H1 (cell line): ENCODE measurements at regions of chr1 and their contacts with region 1.

Region 1: DNA sequence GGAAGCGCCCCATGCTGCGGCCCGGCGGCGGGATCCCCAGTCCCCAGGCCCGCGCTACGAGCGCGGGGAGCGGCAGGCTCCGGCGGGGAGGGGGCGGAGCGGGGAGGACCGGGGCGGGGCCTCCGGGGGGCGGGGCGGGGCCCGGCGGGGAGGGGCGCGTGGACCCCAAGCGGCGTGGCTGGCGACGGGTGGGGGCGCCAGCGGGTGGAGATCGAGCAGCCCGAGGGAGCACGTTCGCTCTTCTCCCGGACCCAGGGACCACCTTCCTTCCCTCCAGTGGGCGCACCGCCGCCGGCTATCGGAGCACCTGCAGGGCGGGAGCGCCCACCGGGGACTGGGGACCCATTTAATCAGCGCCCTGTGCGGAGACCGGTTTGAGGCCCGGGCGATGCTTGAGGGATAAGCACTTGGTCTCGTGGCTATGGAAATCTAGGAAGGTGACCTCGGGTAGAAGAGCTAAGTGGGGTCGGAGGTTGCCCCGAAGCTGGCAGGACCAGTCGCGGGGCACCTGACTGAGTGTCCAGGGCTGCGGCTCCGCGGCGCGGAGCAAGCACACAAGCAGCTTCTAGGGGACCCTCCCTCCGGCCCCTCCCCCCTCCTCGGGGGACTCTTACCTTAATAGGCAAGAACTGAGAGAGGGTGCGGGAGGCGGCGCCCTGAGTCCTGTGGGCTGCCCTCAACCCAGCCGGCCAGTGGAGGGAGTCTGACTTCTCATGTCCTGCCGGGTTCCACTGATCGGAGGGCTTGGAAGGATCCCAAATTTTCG is at the start of gene TSPAN2:
- DNase-seq: peak; percentile 90 to 91
- H3K4me3 ChIP-seq: peak within 1 kb of the TSS; percentile 82 to 100 (median 93)
- H3K27ac ChIP-seq: peak within 1 kb of the TSS; percentile 91
- H3K4me1 ChIP-seq: peaks cover 4 to 10% (median 4%) of the 10 kb centered on the region in 4 experiments; a peak in 5 of 7 replicates
- H3K27me3 ChIP-seq: no peaks in the 10 kb centered on the region; a peak in 2 of 7 replicates
- CTCF ChIP-seq: peak; percentile 51 to 56 (median 52)
- EP300 ChIP-seq: no peak
- POLR2A ChIP-seq: peak; percentile 93 to 95
- RAD21 ChIP-seq: peak; percentile 25 to 41; a peak in 3 of 4 replicates
- total RNA-seq, gene TSPAN2: 13.0 and 14.2 TPM in 2 replicates

Region 2: DNA sequence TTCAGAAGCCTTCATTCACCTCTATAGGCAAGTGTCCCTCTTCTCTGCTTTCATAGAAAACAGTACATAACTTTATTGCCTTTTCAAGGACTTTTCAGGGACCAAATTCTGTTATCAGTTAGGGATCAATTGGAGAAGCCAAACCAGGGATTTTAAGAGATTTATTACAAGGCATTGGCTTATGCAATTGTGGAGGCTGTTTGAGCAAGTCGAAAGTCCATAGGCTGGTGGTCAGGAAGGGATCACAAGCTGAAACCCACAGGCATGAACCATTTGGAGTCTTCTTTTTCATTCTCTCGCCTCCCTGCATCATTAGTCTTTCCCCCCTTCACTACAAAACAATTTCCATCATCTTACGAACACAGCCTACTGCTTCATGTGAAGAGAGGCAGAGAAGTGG is 269.7 kb before region 1 on chr1:
- CTCF ChIA-PET with region 1: no interaction called
- POLR2A ChIA-PET with region 1: no interaction called
- DNase-seq: no peak
- H3K4me3 ChIP-seq: no peak overlapping the region
- H3K27ac ChIP-seq: no peak overlapping the region
- H3K4me1 ChIP-seq: no peaks in the 10 kb centered on the region
- H3K27me3 ChIP-seq: no peaks in the 10 kb centered on the region
- CTCF ChIP-seq: no peak
- EP300 ChIP-seq: no peak
- POLR2A ChIP-seq: no peak
- RAD21 ChIP-seq: no peak

Region 3: DNA sequence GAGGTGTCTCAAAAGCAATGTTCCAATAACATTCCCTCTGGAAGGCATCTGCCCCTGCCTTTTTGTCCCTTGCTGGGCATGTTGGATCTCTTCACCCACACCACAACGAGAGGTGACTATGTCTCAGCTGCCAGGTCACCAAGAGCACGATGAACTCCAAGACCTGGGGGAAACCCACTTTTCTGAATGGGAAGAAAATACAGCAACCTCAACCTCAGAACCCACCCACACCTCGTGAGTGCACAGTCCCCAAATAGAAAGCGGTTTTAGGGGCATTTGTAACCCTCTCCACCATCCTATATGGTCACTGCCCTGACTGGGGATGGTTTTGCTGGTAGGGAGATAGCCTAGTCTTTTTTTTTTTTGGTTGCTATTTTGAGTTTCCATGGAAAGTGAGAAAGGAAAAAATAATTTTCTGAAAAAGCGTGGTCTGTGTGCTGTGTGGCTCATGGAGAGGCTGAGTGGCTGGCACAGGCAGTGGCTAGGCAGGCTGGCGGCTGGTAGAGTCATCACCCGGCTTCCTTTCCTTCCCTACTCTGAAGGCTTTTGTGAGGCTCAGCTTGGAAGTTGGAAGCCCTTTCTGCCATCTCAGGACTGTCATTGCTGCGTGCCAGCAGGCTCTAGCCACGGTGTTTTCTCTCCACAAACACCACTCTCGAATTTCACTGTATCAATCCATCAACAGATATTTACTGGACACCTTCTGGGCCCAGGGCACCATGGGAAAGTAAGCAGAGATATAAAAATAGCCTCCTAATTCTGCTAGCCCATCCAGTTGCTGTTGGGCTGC is 16.1 kb before region 1 on chr1:
- CTCF ChIA-PET with region 1: interaction called, 9 read pairs
- POLR2A ChIA-PET with region 1: interaction called, 29 read pairs
- DNase-seq: no peak
- H3K4me3 ChIP-seq: no peak overlapping the region
- H3K27ac ChIP-seq: no peak overlapping the region
- H3K4me1 ChIP-seq: no peaks in the 10 kb centered on the region; a peak in 1 of 7 replicates
- H3K27me3 ChIP-seq: no peaks in the 10 kb centered on the region
- CTCF ChIP-seq: no peak
- EP300 ChIP-seq: no peak
- POLR2A ChIP-seq: no peak
- RAD21 ChIP-seq: no peak

Region 4: GRCh38 chr1:115138968-115139367 is 49.4 kb after region 1 on chr1:
- CTCF ChIA-PET with region 1: no interaction called
- POLR2A ChIA-PET with region 1: no interaction called
- DNase-seq: peak; percentile 82 to 86
- H3K4me3 ChIP-seq: no peak overlapping the region
- H3K27ac ChIP-seq: no peak overlapping the region
- H3K4me1 ChIP-seq: peaks cover 0 to 2% (median 0%) of the 10 kb centered on the region in 4 experiments; a peak in 2 of 7 replicates
- H3K27me3 ChIP-seq: no peaks in the 10 kb centered on the region
- CTCF ChIP-seq: peak; percentile 89 to 93 (median 89)
- EP300 ChIP-seq: no peak
- POLR2A ChIP-seq: no peak
- RAD21 ChIP-seq: peak; percentile 94 to 95

Region 5: DNA sequence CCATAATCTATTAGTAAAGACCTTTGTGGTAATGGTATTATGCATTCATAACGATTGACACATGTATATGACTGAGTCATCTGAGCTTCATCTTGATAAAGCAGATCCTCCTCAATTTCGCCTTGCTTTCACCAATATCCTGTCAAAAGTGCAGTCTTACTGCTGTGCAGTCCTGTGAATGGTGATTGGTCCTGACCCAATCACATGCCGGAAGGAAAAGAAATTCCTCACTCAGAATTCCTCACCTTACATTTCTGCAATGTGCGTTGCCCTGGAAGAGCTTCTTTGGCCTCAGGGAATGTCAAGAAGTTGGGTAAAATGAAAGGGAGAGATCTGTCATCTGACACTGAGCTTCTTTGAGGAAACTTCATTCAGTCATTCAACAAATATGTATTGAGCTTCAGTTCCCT is 120.7 kb after region 1 on chr1:
- CTCF ChIA-PET with region 1: no interaction called
- POLR2A ChIA-PET with region 1: no interaction called
- DNase-seq: no peak
- H3K4me3 ChIP-seq: no peak overlapping the region
- H3K27ac ChIP-seq: no peak overlapping the region
- H3K4me1 ChIP-seq: no peaks in the 10 kb centered on the region
- H3K27me3 ChIP-seq: no peaks in the 10 kb centered on the region
- CTCF ChIP-seq: no peak
- EP300 ChIP-seq: no peak
- POLR2A ChIP-seq: no peak
- RAD21 ChIP-seq: no peak